Activated CD4-positive, alpha-beta memory T cell treated with anti-CD3 and anti-CD28 coated beads, Interleukin-2, amount 10 ng/mL, durations not matched to agents 7 days and 5 days (primary cell): ENCODE measurements at regions of chr6 and their contacts with region 1.

Region 1: DNA sequence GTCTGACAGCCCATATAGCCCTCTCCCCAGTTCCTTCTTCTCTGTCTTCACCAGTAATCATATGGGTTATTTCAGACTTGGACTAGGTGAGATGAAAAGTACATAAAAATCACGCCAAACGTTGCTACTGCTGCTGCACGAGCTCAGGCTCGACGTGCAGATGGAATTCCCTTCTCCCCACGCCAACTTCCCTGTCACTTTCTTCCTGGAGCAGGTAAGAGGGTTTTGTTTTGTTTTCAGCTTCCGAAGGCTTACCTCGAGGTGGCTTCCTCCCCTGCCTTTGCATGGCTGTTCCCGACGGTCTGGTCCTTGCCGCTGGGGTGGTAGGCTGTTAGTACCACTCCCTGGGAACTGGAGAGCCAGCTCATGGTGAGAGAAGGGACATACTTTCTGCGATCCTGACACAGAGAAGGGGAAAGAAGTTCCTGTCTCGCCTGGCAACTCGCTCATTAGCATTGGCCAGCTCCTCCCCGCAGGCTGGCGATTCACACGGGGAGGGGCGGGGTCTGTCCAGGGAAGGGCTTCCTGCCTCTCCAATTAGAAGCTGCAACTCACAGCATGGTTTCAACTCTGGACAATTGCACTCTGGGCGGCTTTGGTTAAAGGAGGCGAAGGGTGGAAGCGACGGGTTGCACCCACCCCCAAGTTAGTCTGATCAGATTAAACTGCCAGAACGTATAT is at the start of gene ARHGAP18:
- DNase-seq: peak; percentile 82
- H3K4me3 Mint-ChIP-seq: peak within 1 kb of the TSS; percentile 95
- H3K27ac Mint-ChIP-seq: peak within 1 kb of the TSS; percentile 69
- H3K4me1 Mint-ChIP-seq: peaks cover 56% of the 10 kb centered on the region
- H3K27me3 Mint-ChIP-seq: no peaks in the 10 kb centered on the region
- total RNA-seq, gene ARHGAP18: 14.8 to 18.0 TPM

Region 2: GRCh38 chr6:129672881-129673643 is 36.8 kb before region 1 on chr6:
- CTCF ChIA-PET with region 1: interaction called, 6 read pairs
- POLR2A ChIA-PET with region 1: interaction called, 32 read pairs
- DNase-seq: peak; percentile 34
- H3K4me3 Mint-ChIP-seq: peak overlapping the region; percentile 68
- H3K27ac Mint-ChIP-seq: peak overlapping the region; percentile 92
- H3K4me1 Mint-ChIP-seq: peaks cover 63% of the 10 kb centered on the region
- H3K27me3 Mint-ChIP-seq: no peaks in the 10 kb centered on the region

Region 3: DNA sequence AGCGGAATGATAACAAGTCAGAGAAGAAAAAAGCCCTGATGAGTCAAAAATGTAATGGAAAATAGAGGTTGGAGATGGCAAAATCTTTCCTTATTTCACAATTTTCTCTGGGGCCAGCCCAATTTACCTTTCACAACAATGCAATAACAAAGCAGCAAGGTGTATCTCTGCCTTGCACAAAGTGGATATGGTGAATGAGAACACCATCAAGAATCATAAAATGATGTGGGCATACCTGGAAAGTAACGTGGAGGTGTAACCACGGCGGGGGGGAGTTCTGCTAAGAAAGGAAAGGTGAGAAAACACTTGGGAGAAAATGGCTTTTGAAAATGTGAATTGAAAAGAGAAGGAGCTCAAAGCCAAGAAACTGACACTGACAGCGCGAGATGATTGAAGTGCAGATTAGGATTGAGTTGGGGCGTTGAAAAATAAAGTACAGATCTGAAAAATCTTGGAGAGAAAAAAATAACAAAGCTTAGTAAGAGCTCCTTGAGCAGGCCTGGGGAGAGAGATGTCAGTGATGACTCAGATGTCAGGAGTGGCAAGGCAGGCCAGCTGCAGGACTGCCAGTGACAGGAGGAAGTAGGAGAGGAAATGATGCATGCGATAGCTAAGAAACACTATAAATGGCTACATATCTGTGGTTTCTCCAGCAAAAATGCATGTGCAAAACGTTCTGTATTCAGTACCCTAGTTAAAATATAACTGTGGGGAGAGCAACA is 26.1 kb before region 1 on chr6:
- CTCF ChIA-PET with region 1: interaction called, 3 read pairs
- POLR2A ChIA-PET with region 1: interaction called, 15 read pairs
- DNase-seq: peak; percentile 75
- H3K4me3 Mint-ChIP-seq: peak overlapping the region; percentile 36
- H3K27ac Mint-ChIP-seq: peak overlapping the region; percentile 83
- H3K4me1 Mint-ChIP-seq: peaks cover 64% of the 10 kb centered on the region
- H3K27me3 Mint-ChIP-seq: no peaks in the 10 kb centered on the region

Region 4: DNA sequence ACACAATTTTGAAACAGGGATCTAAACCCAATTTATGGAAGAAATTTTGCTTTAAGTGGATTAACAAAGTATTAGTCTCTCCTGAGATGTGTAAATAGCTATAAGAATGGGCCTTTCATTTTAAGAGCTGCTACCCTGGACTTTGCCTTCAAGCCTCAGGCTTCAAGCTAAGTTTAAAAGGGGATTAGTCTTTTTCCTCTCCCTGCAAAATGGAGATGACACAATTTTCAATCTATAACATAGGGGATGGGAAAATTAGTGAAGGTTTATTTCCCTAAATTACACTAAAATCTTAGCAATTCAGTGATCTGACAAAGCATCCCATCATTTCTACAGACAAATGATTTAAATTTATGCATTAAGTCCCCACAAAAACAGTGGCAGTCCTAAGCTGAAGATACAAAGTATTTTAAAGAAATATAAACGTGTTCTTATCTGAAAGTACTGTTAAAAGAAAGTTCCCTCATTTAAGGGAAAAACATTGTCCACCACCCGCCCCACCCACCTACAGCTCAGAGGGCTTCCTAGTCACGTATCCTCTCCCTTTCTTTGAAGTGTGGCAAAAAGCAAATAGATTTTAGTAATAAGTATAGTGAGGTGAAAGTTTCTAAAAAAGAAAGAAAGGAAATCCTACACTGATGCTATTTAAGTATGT is 14.4 kb before region 1 on chr6:
- CTCF ChIA-PET with region 1: interaction called, 5 read pairs
- POLR2A ChIA-PET with region 1: interaction called, 12 read pairs
- DNase-seq: peak; percentile 42
- H3K4me3 Mint-ChIP-seq: peak overlapping the region; percentile 12
- H3K27ac Mint-ChIP-seq: peak overlapping the region; percentile 18
- H3K4me1 Mint-ChIP-seq: peaks cover 41% of the 10 kb centered on the region
- H3K27me3 Mint-ChIP-seq: peaks cover 5% of the 10 kb centered on the region

Region 5: GRCh38 chr6:129730477-129731165 is 20.7 kb after region 1 on chr6:
- CTCF ChIA-PET with region 1: interaction called, 27 read pairs
- POLR2A ChIA-PET with region 1: no interaction called
- DNase-seq: peak; percentile 30
- H3K4me3 Mint-ChIP-seq: no peak overlapping the region
- H3K27ac Mint-ChIP-seq: no peak overlapping the region
- H3K4me1 Mint-ChIP-seq: peaks cover 16% of the 10 kb centered on the region
- H3K27me3 Mint-ChIP-seq: no peaks in the 10 kb centered on the region

Region 6: GRCh38 chr6:129785047-129785755 is 75.3 kb after region 1 on chr6:
- CTCF ChIA-PET with region 1: no interaction called
- POLR2A ChIA-PET with region 1: no interaction called
- DNase-seq: no peak
- H3K4me3 Mint-ChIP-seq: no peak overlapping the region
- H3K27ac Mint-ChIP-seq: no peak overlapping the region
- H3K4me1 Mint-ChIP-seq: no peaks in the 10 kb centered on the region
- H3K27me3 Mint-ChIP-seq: peaks cover 5% of the 10 kb centered on the region